IMR-90 (cell line): ENCODE measurements at regions of chr13 and their contacts with region 1.

Region 1: DNA sequence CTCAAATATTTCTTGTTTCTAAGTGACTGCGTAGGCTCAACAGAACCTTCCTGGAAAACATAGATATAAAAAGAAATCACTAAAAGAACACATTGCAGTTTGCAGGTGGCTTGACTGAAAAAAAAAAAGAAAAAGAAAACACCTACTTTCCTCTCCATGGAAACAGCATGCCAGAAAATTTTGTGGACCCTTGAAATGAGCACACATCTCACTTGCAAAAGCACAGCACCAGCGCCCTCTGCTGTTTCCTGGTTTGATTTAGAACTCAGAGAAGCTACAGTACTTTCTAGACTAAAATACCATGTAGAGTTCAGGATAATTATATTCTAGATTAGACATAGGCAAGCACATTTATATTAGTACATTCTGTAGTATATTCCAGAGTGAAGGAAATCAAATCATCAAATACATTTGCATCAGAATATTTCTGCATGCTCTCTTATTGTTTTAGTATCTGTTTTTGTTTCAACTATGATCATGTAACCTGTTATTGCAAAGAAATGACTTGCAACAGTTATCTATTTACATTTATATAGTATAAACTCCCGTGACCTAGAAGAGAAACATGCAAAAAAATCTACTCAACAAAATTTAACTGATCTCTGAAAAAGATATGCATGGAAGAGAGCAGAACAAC is 22.3 kb upstream of the XPO4 start:
- DNase-seq: peak; percentile 84
- ATAC-seq: peak; percentile 80
- H3K4me3 ChIP-seq: no peak overlapping the region
- H3K27ac ChIP-seq: no peak overlapping the region
- H3K4me1 ChIP-seq: no peaks in the 10 kb centered on the region
- H3K27me3 ChIP-seq: 0 out of 2 replicates have a peak, but pooled peaks cover 2% of the 10 kb centered on the region
- CTCF ChIP-seq: peak; percentile 91
- POLR2A ChIP-seq: no peak
- RAD21 ChIP-seq: peak; percentile 91

Region 2: GRCh38 chr13:20182231-20182846 is 742.5 kb before region 1 on chr13:
- CTCF ChIA-PET with region 1: no interaction called
- POLR2A ChIA-PET with region 1: no interaction called
- dilution Hi-C with region 1: no loop called
- in situ Hi-C with region 1: loop called (anchors 10 kb)
- intact Hi-C with region 1: loop called (anchors 5 kb)
- DNase-seq: peak; percentile 80
- ATAC-seq: peak; percentile 99
- H3K4me3 ChIP-seq: no peak overlapping the region
- H3K27ac ChIP-seq: no peak overlapping the region
- H3K4me1 ChIP-seq: no peaks in the 10 kb centered on the region
- H3K27me3 ChIP-seq: peaks cover 19% of the 10 kb centered on the region
- CTCF ChIP-seq: peak; percentile 79
- POLR2A ChIP-seq: no peak
- RAD21 ChIP-seq: peak; percentile 87

Region 3: DNA sequence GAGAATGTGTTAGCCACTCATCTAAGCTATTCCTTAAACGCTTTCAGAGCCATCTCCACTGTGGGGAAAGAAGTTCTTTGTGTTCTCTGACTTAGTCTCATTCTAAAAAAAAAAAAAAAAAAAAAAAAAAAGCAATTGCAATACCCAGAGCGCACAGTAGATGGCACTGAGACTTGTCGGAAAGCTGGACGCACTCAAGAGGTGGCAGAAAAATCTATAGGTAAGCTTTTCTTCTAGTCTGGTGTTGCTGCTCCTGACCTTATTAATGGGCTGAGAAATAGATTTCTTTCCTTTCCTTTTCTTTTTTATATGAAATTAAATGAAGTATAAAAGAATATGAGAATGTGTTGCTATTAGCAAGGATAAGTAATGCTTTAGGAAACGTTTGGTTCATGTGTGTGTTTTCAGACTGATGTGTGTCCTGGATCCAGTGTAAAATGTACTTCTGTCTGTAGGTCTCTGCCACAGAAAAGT is 727.5 kb before region 1 on chr13:
- CTCF ChIA-PET with region 1: no interaction called
- POLR2A ChIA-PET with region 1: no interaction called
- dilution Hi-C with region 1: no loop called
- in situ Hi-C with region 1: no loop called
- intact Hi-C with region 1: loop called (anchors 5 kb)
- DNase-seq: peak; percentile 56
- ATAC-seq: peak; percentile 73
- H3K4me3 ChIP-seq: no peak overlapping the region
- H3K27ac ChIP-seq: no peak overlapping the region
- H3K4me1 ChIP-seq: peaks cover 2% of the 10 kb centered on the region; the same call in 1 of the 2 replicates
- H3K27me3 ChIP-seq: peaks cover 65% of the 10 kb centered on the region
- CTCF ChIP-seq: peak; percentile 80
- POLR2A ChIP-seq: no peak
- RAD21 ChIP-seq: peak; percentile 76

Region 4: GRCh38 chr13:20495082-20496023 is 429.5 kb before region 1 on chr13:
- CTCF ChIA-PET with region 1: interaction called, 5 read pairs
- POLR2A ChIA-PET with region 1: no interaction called
- dilution Hi-C with region 1: no loop called
- in situ Hi-C with region 1: loop called (anchors 5 kb)
- intact Hi-C with region 1: loop called (anchors 1 kb)
- DNase-seq: peak; percentile 72
- ATAC-seq: peak; percentile 91
- H3K4me3 ChIP-seq: no peak overlapping the region
- H3K27ac ChIP-seq: no peak overlapping the region
- H3K4me1 ChIP-seq: peaks cover 5% of the 10 kb centered on the region
- H3K27me3 ChIP-seq: no peaks in the 10 kb centered on the region
- CTCF ChIP-seq: peak; percentile 94
- POLR2A ChIP-seq: no peak
- RAD21 ChIP-seq: peak; percentile 98

Region 5: GRCh38 chr13:20713751-20714150 is 211.1 kb before region 1 on chr13:
- CTCF ChIA-PET with region 1: interaction called, 8 read pairs
- POLR2A ChIA-PET with region 1: no interaction called
- dilution Hi-C with region 1: no loop called
- in situ Hi-C with region 1: loop called (anchors 5 kb)
- intact Hi-C with region 1: loop called (anchors 2 kb)
- DNase-seq: peak; percentile 39
- ATAC-seq: no peak
- H3K4me3 ChIP-seq: no peak overlapping the region
- H3K27ac ChIP-seq: no peak overlapping the region
- H3K4me1 ChIP-seq: peaks cover 9% of the 10 kb centered on the region
- H3K27me3 ChIP-seq: peaks cover 1% of the 10 kb centered on the region; the same call in 1 of the 2 replicates
- CTCF ChIP-seq: no peak
- POLR2A ChIP-seq: no peak
- RAD21 ChIP-seq: no peak

Region 6: DNA sequence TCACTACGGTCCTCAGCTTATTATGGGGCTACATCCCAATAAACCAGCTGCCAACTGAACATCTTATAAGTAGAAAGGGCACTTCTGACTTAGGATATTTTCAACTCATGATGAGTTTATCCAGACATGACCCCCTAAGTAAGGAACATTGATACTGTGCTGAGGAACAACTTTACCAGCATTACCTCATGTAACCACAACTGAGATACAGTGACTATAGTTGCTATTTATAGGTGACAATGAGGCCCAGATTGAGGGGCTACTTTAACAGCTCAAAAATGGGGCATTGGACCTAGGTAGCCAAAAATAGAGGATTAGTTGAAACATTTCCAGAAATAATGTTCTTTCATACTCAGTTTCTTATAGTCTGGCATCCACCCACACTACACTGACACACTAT is 224.7 kb after region 1 on chr13:
- CTCF ChIA-PET with region 1: no interaction called
- POLR2A ChIA-PET with region 1: interaction called, 12 read pairs
- dilution Hi-C with region 1: no loop called
- in situ Hi-C with region 1: no loop called
- intact Hi-C with region 1: no loop called
- DNase-seq: peak; percentile 38
- ATAC-seq: peak; percentile 48
- H3K4me3 ChIP-seq: no peak overlapping the region
- H3K27ac ChIP-seq: no peak overlapping the region
- H3K4me1 ChIP-seq: peaks cover 6% of the 10 kb centered on the region; the same call in 1 of the 2 replicates
- H3K27me3 ChIP-seq: no peaks in the 10 kb centered on the region
- CTCF ChIP-seq: no peak
- POLR2A ChIP-seq: no peak
- RAD21 ChIP-seq: no peak